IMR-90 (cell line): ENCODE measurements at regions of chr12 and their contacts with region 1.

Region 1: DNA sequence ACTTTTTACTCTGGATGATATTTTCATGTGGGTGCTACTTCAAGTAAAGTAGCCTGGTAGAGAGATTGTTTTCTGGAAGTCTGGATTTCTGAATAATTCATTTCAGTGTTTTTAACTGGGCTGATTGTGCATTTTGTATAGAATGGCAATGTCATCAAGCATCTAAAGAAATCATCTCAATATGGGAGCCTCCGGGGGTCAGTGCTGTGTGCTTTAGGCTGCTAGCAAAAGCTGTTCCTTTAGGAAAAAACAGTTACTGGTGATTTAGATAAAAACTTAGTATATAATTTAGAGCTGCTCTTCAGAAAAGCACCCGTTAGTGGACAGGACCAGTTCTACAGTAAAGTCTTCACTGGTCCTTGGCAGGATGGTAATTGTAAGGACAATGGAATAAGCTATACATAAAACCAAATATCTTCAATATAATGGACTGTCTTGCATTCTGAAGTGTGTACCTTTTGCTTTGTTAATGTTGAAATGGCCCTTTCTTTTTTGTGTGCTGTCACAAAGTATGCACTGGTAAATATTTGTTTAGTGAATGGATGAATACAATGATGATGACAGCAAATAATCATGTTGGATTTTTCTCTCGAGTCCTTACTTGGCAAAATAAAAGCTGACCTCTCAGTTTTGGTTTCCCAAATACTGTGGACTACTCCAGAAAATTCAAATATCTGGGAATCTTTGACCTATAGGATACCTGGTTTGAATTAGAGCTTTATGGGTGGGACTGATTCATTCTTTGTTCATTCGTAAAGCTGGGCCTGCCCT is 5.2 kb downstream of the UBE3B start:
- DNase-seq: no peak
- ATAC-seq: no peak
- H3K4me3 ChIP-seq: no peak overlapping the region
- H3K27ac ChIP-seq: no peak overlapping the region
- H3K4me1 ChIP-seq: no peaks in the 10 kb centered on the region; the same call in 1 of the 2 replicates
- H3K27me3 ChIP-seq: no peaks in the 10 kb centered on the region
- CTCF ChIP-seq: no peak
- POLR2A ChIP-seq: no peak
- RAD21 ChIP-seq: no peak

Region 2: DNA sequence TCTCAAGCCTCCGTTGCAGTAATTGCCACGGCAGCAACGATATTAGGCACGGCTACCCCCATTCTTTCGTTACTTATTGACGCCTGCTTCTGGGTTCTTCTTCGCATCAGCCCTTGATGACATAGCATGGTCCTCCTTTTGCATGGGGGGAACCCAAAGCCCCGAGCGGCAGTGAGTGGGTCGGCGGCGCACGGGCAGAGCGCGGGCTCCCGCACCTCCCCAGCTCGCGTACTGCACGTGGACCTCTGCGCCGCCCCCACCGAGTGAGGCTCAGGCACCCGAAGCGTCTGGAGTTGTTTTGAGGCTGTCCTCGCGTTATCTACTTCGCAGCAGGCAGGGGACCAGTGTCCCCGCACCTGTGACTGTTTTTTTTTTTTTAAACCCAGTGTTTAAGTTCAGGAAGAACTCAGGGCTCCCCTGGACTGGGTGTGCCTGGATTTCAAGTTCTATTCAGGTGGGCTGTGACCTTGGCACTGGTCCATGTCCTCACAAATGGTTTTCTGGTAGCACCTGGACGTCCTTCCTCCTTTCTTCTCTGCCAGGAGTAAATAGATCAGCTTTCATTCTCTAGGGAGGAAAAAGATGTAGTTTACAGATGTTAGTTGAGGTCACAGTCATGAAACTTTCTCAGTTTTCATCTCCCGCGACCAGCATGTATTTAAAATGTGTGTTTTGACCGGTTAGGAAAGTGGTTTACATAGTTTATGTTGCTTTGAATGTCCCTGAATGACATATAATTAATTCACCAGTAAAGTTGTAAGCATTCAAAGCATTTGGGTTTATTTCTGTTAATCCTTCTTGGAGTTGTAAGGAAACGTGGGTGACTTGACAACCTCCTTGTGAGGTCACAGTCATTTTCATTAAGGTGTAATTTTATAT is 172.2 kb before region 1 on chr12:
- CTCF ChIA-PET with region 1: no interaction called
- POLR2A ChIA-PET with region 1: no interaction called
- dilution Hi-C with region 1: no loop called
- in situ Hi-C with region 1: no loop called
- intact Hi-C with region 1: loop called (anchors 5 kb)
- DNase-seq: no peak
- ATAC-seq: no peak
- H3K4me3 ChIP-seq: no peak overlapping the region; the same call in 1 of the 2 replicates
- H3K27ac ChIP-seq: no peak overlapping the region
- H3K4me1 ChIP-seq: no peaks in the 10 kb centered on the region; the same call in 1 of the 2 replicates
- H3K27me3 ChIP-seq: peaks cover 70% of the 10 kb centered on the region
- CTCF ChIP-seq: no peak
- POLR2A ChIP-seq: no peak
- RAD21 ChIP-seq: no peak